ENCODE measurements at regions of chr13 and their contacts with region 1.

Region 1: GRCh38 chr13:94549232-94550061 is 46.5 kb downstream of the TGDS start:
- DNase-seq: peak; percentile 86 to 96 (median 92)
- ATAC-seq: peak; percentile 88
- H3K4me3 ChIP-seq: peak overlapping the region; percentile 76 to 84
- H3K4me3 Mint-ChIP-seq: peak overlapping the region; percentile 91
- H3K27ac ChIP-seq: peak overlapping the region; percentile 90 to 92
- H3K27ac Mint-ChIP-seq: peak overlapping the region; percentile 97
- H3K4me1 ChIP-seq: peaks cover 13% of the 10 kb centered on the region
- H3K4me1 Mint-ChIP-seq: peaks cover 21% of the 10 kb centered on the region
- H3K27me3 ChIP-seq: no peaks in the 10 kb centered on the region
- H3K27me3 Mint-ChIP-seq: peaks cover 2% of the 10 kb centered on the region
- CTCF ChIP-seq: no peak

Region 2: GRCh38 chr13:94416454-94417080 is 132.9 kb before region 1 on chr13:
- CTCF ChIA-PET with region 1: no interaction called
- POLR2A ChIA-PET with region 1: no interaction called
- intact Hi-C with region 1: no loop called
- DNase-seq: no peak
- ATAC-seq: no peak
- H3K4me3 ChIP-seq: no peak overlapping the region
- H3K4me3 Mint-ChIP-seq: no peak overlapping the region
- H3K27ac ChIP-seq: no peak overlapping the region
- H3K27ac Mint-ChIP-seq: no peak overlapping the region
- H3K4me1 ChIP-seq: peaks cover 21% of the 10 kb centered on the region
- H3K4me1 Mint-ChIP-seq: peaks cover 22% of the 10 kb centered on the region
- H3K27me3 ChIP-seq: no peaks in the 10 kb centered on the region
- H3K27me3 Mint-ChIP-seq: peaks cover 6% of the 10 kb centered on the region
- CTCF ChIP-seq: no peak

Region 3: DNA sequence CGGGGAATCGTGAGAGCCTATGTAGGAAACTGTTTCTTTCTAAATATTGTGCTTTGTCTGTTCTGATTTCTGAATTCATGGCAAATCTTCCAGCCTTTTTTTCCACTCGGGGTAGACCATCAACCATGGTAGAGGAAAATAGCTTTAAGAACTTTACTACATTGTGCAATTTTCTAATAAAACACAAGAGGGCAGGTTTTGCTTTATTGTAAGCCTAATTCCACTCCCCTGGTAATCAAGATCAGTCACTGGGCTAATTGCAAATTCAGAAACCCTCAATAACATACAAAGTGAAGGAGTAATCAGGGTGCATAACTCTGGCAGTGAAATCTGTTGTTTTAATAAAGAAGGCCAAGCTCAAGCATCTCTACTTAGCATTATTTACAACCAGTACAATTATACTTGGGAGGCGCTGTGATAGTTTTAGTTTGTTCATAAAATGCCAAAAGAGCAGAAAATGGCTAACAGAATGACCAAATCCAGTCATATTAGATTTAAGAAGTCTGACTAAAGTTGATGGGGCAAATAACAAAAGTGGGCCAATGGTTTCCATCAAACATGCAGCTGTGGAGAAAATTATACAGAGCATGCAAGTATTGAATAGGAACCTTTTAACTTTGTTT is 113.7 kb before region 1 on chr13:
- CTCF ChIA-PET with region 1: interaction called, 22 read pairs
- POLR2A ChIA-PET with region 1: no interaction called
- intact Hi-C with region 1: loop called in 1 of 2 experiments (anchors 2 kb)
- DNase-seq: peak in 2 of 9 experiments; percentile 54 to 64
- ATAC-seq: peak; percentile 81
- H3K4me3 ChIP-seq: no peak overlapping the region
- H3K4me3 Mint-ChIP-seq: no peak overlapping the region
- H3K27ac ChIP-seq: no peak overlapping the region
- H3K27ac Mint-ChIP-seq: no peak overlapping the region
- H3K4me1 ChIP-seq: no peaks in the 10 kb centered on the region
- H3K4me1 Mint-ChIP-seq: peaks cover 4% of the 10 kb centered on the region
- H3K27me3 ChIP-seq: no peaks in the 10 kb centered on the region
- H3K27me3 Mint-ChIP-seq: no peaks in the 10 kb centered on the region
- CTCF ChIP-seq: peak; percentile 82

Region 4: GRCh38 chr13:94595950-94596574 is 46.6 kb after region 1 on chr13 and contains the start of gene TGDS:
- CTCF ChIA-PET with region 1: interaction called, 19 read pairs
- POLR2A ChIA-PET with region 1: interaction called, 44 read pairs
- intact Hi-C with region 1: loop called (anchors 1 to 2 kb)
- DNase-seq: peak; percentile 74 to 96 (median 87)
- ATAC-seq: peak; percentile 97
- H3K4me3 ChIP-seq: peak within 1 kb of the TSS; percentile 94 to 97
- H3K4me3 Mint-ChIP-seq: peak within 1 kb of the TSS; percentile 88
- H3K27ac ChIP-seq: peak within 1 kb of the TSS; percentile 77 to 83
- H3K27ac Mint-ChIP-seq: peak within 1 kb of the TSS; percentile 94
- H3K4me1 ChIP-seq: peaks cover 24% of the 10 kb centered on the region
- H3K4me1 Mint-ChIP-seq: peaks cover 42% of the 10 kb centered on the region
- H3K27me3 ChIP-seq: no peaks in the 10 kb centered on the region
- H3K27me3 Mint-ChIP-seq: no peaks in the 10 kb centered on the region
- CTCF ChIP-seq: no peak
- total RNA-seq, gene TGDS: 4.5 to 4.6 TPM

Region 5: GRCh38 chr13:94620286-94620896 is 70.9 kb after region 1 on chr13:
- CTCF ChIA-PET with region 1: interaction called, 24 read pairs
- POLR2A ChIA-PET with region 1: interaction called, 6 read pairs
- intact Hi-C with region 1: no loop called
- DNase-seq: peak in 4 of 9 experiments; percentile 14 to 50 (median 25)
- ATAC-seq: peak; percentile 73
- H3K4me3 ChIP-seq: no peak overlapping the region
- H3K4me3 Mint-ChIP-seq: no peak overlapping the region
- H3K27ac ChIP-seq: no peak overlapping the region
- H3K27ac Mint-ChIP-seq: no peak overlapping the region
- H3K4me1 ChIP-seq: no peaks in the 10 kb centered on the region
- H3K4me1 Mint-ChIP-seq: peaks cover 17% of the 10 kb centered on the region
- H3K27me3 ChIP-seq: no peaks in the 10 kb centered on the region
- H3K27me3 Mint-ChIP-seq: no peaks in the 10 kb centered on the region
- CTCF ChIP-seq: peak; percentile 65

Region 6: GRCh38 chr13:95301183-95301967 is 751.9 kb after region 1 on chr13 and contains the start of gene ABCC4:
- CTCF ChIA-PET with region 1: no interaction called
- POLR2A ChIA-PET with region 1: no interaction called
- intact Hi-C with region 1: loop called in 1 of 2 experiments (anchors 2 kb)
- DNase-seq: peak in 8 of 9 experiments; percentile 33 to 75 (median 50)
- ATAC-seq: peak; percentile 77
- H3K4me3 ChIP-seq: peak within 1 kb of the TSS; percentile 74 to 79
- H3K4me3 Mint-ChIP-seq: peak within 1 kb of the TSS; percentile 82
- H3K27ac ChIP-seq: no peak within 1 kb of the TSS
- H3K27ac Mint-ChIP-seq: peak within 1 kb of the TSS; percentile 12
- H3K4me1 ChIP-seq: peaks cover 8% of the 10 kb centered on the region
- H3K4me1 Mint-ChIP-seq: peaks cover 24% of the 10 kb centered on the region
- H3K27me3 ChIP-seq: no peaks in the 10 kb centered on the region
- H3K27me3 Mint-ChIP-seq: no peaks in the 10 kb centered on the region
- CTCF ChIP-seq: no peak
- total RNA-seq, gene ABCC4: 3.3 to 3.4 TPM